ENCODE measurements at regions of chr21 and their contacts with region 1.

Region 1: DNA sequence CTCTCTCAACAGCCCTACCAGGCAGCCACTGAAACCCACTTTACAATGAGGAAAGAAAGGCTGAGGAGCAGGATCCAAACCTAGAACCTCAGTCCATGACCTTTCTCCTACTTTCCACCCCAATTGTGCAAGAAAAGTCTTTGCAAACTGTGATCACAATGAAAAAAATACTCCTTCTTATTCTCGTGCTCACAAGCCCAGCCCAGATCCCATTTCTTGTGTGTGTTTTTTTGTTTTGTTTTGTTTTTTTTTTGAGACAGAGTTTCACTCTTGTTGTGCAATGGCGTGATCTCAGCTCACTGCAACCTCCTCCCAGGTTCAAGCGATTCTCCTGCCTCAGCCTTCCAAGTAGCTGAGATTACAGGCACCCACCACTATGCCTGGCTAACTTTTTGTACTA is 97.7 kb downstream of the CRYAA start:
- DNase-seq: no peak
- H3K4me3 ChIP-seq: no peak overlapping the region
- H3K27ac ChIP-seq: no peak overlapping the region
- H3K4me1 ChIP-seq: no peaks in the 10 kb centered on the region
- H3K27me3 ChIP-seq: no peaks in the 10 kb centered on the region; a peak in 1 of 7 replicates
- CTCF ChIP-seq: no peak
- EP300 ChIP-seq: no peak
- POLR2A ChIP-seq: no peak
- RAD21 ChIP-seq: no peak

Region 2: DNA sequence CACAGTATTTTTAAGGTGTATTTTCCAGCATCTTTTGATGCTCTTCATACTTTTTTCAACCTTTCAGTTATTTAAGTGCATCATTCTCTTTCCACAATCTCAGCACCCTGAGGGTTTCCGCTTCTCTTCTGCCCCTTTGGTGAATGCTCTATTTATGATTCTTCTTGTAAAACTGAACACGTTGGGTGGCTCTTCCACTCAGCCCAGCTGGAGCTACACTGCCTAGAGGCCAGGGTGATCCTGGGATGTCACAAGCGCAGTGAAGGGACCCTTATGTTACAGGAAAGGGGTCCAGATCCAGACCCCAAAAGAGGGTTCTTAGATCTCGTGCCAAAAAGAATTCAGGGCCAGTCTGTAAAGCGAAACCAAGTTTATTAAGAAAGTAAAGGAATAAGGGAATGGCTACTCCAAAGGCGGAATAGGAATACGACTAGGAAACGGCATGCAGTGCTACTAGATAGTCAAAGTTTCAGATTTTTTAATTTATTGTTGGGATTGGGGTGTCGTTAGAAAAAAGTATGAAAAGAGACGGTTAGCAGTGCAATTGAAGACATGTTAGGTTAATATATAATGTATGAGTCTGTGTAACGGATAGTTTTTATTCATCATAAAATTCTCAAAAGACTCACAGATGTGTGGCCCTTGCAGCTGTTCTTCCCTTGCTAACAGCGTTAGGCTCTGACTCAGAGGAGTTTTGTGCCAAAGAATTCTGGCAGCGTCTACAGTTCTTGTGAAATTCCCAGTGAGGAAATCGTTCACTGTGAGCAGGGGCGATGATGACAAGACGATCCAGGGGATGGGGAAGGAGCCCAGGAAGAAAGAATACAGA is 326.7 kb before region 1 on chr21:
- CTCF ChIA-PET with region 1: no interaction called
- POLR2A ChIA-PET with region 1: no interaction called
- DNase-seq: no peak
- H3K4me3 ChIP-seq: no peak overlapping the region
- H3K27ac ChIP-seq: no peak overlapping the region
- H3K4me1 ChIP-seq: peaks cover 0 to 25% (median 12%) of the 10 kb centered on the region in 4 experiments; a peak in 6 of 7 replicates
- H3K27me3 ChIP-seq: no peaks in the 10 kb centered on the region
- CTCF ChIP-seq: no peak
- EP300 ChIP-seq: no peak
- POLR2A ChIP-seq: no peak
- RAD21 ChIP-seq: no peak

Region 3: DNA sequence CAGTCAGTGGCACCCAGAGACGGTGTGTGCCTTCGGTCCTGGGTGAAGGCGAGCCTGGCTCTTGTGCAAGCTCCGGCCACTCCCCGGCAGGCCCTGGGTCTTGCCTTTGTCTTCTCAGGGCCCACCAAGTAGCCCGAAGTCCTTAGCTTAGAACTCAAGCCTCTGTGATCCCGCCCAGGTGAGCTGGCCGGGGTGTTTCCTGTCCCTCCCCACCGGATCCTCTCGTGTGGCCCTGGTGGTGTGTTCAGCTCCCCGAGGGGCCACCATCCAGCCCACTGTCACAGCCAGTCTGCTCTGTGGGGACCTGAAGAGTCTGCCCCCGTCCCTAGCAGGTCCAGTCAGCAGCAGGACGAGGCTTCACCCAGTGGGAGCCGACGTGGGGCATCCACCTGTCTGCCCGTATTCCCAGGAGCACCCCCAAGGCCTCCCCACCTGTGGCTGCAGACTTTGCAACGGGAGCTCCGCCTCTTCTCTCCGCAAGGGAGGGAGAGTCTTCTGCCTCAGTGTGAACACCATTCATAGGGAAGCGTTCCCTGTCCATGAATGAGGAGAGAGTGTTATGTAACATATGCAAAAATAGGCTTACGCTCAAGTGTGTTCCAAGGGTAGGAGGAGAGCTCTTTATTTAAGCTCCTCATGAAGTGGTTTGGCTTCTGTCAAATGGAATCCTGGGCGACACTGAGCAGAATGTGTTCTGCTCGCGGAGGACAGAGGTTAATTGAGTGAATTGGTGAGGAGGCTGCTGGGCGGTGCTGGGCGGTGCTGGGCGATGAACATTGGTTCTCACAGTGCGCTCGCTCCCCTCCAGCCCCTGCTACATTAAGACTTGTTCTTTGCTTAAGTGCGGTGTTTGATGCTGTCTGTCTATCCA is 11.2 kb after region 1 on chr21:
- CTCF ChIA-PET with region 1: interaction called, 11 read pairs
- POLR2A ChIA-PET with region 1: interaction called, 3 read pairs
- DNase-seq: no peak
- H3K4me3 ChIP-seq: peak overlapping the region in 1 of 4 experiments; percentile 29; a peak in 3 of 8 replicates
- H3K27ac ChIP-seq: no peak overlapping the region
- H3K4me1 ChIP-seq: peaks cover 0 to 26% (median 13%) of the 10 kb centered on the region in 4 experiments; a peak in 6 of 7 replicates
- H3K27me3 ChIP-seq: no peaks in the 10 kb centered on the region; a peak in 1 of 7 replicates
- CTCF ChIP-seq: no peak
- EP300 ChIP-seq: no peak
- POLR2A ChIP-seq: no peak
- RAD21 ChIP-seq: no peak